GM13977 (cell line): ENCODE measurements at regions of chr14 and their contacts with region 1.

Region 1: GRCh38 chr14:35404449-35405303 is at the start of gene NFKBIA:
- DNase-seq: peak; percentile 88
- CTCF ChIP-seq: peak; percentile 59

Region 2: GRCh38 chr14:34665785-34666435 is 738.8 kb before region 1 on chr14:
- in situ Hi-C with region 1: loop called (anchors 25 kb)
- DNase-seq: no peak
- CTCF ChIP-seq: no peak

Region 3: GRCh38 chr14:34857689-34858449 is 546.8 kb before region 1 on chr14:
- in situ Hi-C with region 1: no loop called
- DNase-seq: no peak
- CTCF ChIP-seq: no peak

Region 4: DNA sequence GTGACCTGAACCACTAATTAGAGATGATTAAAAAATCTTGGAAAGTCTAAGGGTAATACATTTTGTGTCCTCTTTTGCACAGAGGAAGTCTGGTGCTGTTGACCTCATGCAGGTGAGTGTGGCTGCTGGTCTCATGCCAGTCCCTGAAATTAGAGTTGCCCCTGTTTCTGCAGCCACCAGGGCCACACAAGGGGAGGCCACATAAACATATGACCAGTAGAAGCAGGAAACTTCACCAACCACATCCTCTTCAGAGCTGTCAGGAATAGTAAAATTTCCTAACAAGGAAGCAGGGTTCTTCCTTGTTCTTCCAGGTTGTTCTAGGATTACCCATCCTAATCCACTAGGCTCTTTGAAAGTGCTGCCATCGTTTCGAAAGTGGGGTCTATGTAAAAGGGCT is 84.2 kb before region 1 on chr14:
- in situ Hi-C with region 1: no loop called
- DNase-seq: no peak
- CTCF ChIP-seq: no peak

Region 5: GRCh38 chr14:35607397-35607796 is 202.7 kb after region 1 on chr14:
- in situ Hi-C with region 1: no loop called
- DNase-seq: no peak
- CTCF ChIP-seq: no peak